Heart right ventricle (tissue), 16 donors: ENCODE measurements at regions of chr19 and their contacts with region 1.

Region 1: GRCh38 chr19:19531951-19532805 is 3.5 kb downstream of the YJEFN3 start:
- DNase-seq: peak; percentile 74 to 90
- ATAC-seq: peak; percentile 43 to 82 (median 77)
- H3K4me3 ChIP-seq: no peak overlapping the region
- H3K27ac ChIP-seq: no peak overlapping the region
- H3K4me1 ChIP-seq: peaks cover 0 to 18% (median 8%) of the 10 kb centered on the region in 9 donors
- H3K27me3 ChIP-seq: peaks cover 0 to 6% (median 0%) of the 10 kb centered on the region in 7 donors
- CTCF ChIP-seq: peak; percentile 90 to 98 (median 96)

Region 2: DNA sequence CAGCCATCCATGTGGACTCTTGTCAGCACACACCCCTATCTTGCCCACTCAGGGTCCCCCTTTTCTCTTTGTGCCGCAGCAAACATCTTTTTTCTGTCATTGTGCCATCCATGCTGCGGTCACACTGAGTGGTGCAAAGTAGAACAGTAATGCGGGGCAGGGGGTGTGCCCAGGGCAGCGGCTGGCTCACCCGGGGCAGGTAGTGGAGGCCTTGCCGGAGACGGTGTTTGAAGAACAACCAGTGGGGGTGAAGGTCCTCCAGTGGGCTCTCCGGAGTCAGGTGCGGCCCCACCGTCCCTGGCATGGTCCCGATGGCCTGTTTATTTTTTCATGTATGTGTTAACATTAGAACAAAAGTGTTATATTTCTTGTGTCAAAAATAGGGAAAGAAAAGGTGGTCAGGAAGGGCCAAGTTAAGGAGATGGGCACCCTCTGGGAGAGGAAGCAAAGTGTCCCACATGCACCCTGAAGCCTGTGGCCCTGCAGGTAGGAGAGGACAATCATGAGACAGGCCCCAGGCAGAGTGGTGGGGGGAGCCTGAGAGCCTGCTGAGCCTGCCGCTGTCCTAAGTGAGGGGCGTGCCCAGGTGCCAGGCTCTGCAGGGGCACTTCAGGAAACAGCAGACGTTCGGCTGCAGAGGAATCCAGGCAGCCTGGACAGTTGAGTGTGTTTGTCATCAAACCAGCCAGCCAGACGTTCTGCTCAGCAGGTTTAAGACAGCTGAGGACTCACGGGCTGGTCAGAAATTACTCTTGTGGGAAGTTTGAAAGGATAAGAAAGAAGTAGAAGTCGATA is 29.2 kb before region 1 on chr19:
- intact Hi-C with region 1: no loop called
- DNase-seq: no peak
- ATAC-seq: no peak
- H3K4me3 ChIP-seq: no peak overlapping the region
- H3K27ac ChIP-seq: no peak overlapping the region
- H3K4me1 ChIP-seq: no peaks in the 10 kb centered on the region
- H3K27me3 ChIP-seq: no peaks in the 10 kb centered on the region
- CTCF ChIP-seq: no peak

Region 3: GRCh38 chr19:19554074-19555023 is 22.2 kb after region 1 on chr19:
- intact Hi-C with region 1: loop called in 2 of 10 experiments (anchors 2 kb)
- DNase-seq: peak in 1 of 2 donors; percentile 60
- ATAC-seq: peak in 5 of 8 donors; percentile 53 to 64 (median 56)
- H3K4me3 ChIP-seq: no peak overlapping the region
- H3K27ac ChIP-seq: no peak overlapping the region
- H3K4me1 ChIP-seq: peaks cover 0 to 8% (median 0%) of the 10 kb centered on the region in 9 donors
- H3K27me3 ChIP-seq: peaks cover 0 to 17% (median 7%) of the 10 kb centered on the region in 7 donors
- CTCF ChIP-seq: peak; percentile 47 to 84 (median 74)

Region 4: GRCh38 chr19:19643158-19644053 is 111.2 kb after region 1 on chr19 and contains the start of gene GMIP:
- intact Hi-C with region 1: loop called (anchors 1 to 5 kb)
- DNase-seq: peak; percentile 72 to 84
- ATAC-seq: peak; percentile 74 to 91 (median 85)
- H3K4me3 ChIP-seq: peak within 1 kb of the TSS; percentile 47 to 85 (median 76)
- H3K27ac ChIP-seq: peak within 1 kb of the TSS in 8 of 10 donors; percentile 30 to 96 (median 68)
- H3K4me1 ChIP-seq: peaks cover 0 to 18% (median 12%) of the 10 kb centered on the region in 9 donors
- H3K27me3 ChIP-seq: no peaks in the 10 kb centered on the region
- CTCF ChIP-seq: peak; percentile 89 to 94 (median 91)
- total RNA-seq, gene GMIP: 1.4 to 11.8 (median 2.4) TPM

Region 5: GRCh38 chr19:19937403-19937802 is 405.2 kb after region 1 on chr19:
- intact Hi-C with region 1: loop called in 1 of 10 experiments (anchors 10 kb)
- DNase-seq: no peak
- ATAC-seq: no peak
- H3K4me3 ChIP-seq: no peak overlapping the region
- H3K27ac ChIP-seq: no peak overlapping the region
- H3K4me1 ChIP-seq: no peaks in the 10 kb centered on the region
- H3K27me3 ChIP-seq: no peaks in the 10 kb centered on the region
- CTCF ChIP-seq: no peak

Region 6: GRCh38 chr19:19956434-19957075 is 424.4 kb after region 1 on chr19:
- intact Hi-C with region 1: loop called in 8 of 10 experiments (anchors 2 to 10 kb)
- DNase-seq: no peak
- ATAC-seq: no peak
- H3K4me3 ChIP-seq: no peak overlapping the region
- H3K27ac ChIP-seq: no peak overlapping the region
- H3K4me1 ChIP-seq: peaks cover 0 to 3% (median 0%) of the 10 kb centered on the region in 9 donors
- H3K27me3 ChIP-seq: peaks cover 0 to 4% (median 0%) of the 10 kb centered on the region in 7 donors
- CTCF ChIP-seq: no peak

Region 7: GRCh38 chr19:19966862-19967261 is 434.7 kb after region 1 on chr19:
- intact Hi-C with region 1: loop called in 1 of 10 experiments (anchors 10 kb)
- DNase-seq: no peak
- ATAC-seq: no peak
- H3K4me3 ChIP-seq: no peak overlapping the region
- H3K27ac ChIP-seq: no peak overlapping the region
- H3K4me1 ChIP-seq: no peaks in the 10 kb centered on the region
- H3K27me3 ChIP-seq: no peaks in the 10 kb centered on the region
- CTCF ChIP-seq: no peak